Endothelial cell of umbilical vein (primary cell): ENCODE measurements at regions of chr19 and their contacts with region 1.

Region 1: DNA sequence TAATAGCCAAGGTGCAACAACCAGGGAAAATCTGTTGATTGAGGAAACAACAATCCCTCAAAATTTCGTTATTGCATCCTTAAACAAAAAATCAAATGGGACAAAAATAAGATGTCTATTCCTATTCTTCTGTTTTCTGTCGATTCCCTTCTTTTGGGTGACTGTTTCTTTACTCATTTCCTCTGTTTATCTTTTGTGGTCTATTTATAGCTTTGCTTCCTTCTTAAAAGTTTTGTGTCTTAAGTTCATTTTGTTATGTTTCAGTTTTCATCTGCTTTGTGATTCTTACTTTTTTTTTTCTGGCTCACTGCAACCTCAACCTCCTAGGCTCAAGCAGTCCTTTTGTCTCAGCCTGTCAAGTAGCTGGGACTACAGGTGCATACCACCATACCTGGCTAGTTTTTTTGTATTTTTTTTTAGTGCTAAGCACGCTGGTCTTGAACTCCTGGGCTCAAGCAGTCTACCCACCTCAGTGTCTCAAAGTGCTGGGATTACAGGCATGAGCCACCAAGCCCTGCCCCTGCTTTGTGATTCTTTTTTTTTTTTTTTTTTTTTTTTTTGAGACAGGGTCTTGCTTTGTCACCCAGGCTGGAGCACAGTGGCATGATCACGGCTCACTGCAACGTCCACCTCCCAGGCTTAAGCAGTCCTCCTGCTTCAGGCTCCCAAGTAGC is 10.4 kb downstream of the ZNF146 start:
- DNase-seq: peak; percentile 72
- H3K4me3 ChIP-seq: peak overlapping the region in 1 of 3 experiments; percentile 42
- H3K27ac ChIP-seq: peak overlapping the region; percentile 83
- H3K4me1 ChIP-seq: peaks cover 22% of the 10 kb centered on the region
- H3K27me3 ChIP-seq: no peaks in the 10 kb centered on the region
- CTCF ChIP-seq: no peak
- POLR2A ChIP-seq: no peak

Region 2: DNA sequence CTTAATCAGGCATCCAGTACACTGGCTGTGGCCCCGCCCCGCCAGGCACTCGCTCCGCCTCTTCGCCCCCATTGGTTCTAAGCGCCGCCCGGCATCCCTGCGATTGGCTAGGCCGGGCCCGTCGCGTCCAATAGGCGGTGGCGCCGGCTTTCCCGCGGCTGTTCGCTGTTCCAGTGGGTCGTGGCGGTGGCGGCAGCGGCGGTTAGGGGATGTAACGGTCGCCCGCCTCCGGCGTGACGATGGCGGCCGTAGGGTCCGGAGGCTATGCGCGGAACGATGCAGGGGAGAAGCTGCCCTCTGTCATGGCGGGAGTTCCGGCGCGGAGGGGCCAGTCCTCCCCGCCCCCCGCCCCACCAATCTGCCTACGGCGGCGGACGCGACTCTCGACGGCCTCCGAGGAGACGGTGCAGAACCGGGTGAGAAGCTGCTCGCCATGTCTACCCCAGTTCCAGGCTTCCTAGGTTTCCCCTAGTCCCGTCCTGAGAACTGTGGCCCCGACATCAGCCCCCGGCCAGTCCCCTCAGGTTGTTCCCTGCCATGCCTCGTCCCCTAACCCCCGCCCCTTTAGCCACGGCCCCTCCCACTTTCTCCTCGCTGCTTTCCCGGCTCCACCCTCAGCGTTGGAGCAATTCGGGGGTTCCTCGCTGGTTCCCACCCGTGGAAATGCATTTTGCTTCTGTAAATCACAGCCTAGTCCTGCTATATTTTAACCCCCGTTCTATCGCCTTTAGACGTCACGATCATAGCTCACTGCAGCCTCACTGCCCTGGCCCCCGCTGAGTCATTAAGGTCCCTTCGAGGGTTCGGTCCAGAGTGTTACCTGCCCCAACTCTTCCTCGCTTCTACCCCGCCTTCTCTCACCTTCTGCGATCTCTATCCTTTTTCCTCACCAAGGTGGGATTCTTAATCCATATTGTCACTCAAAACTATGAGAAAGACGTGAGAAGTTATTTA is 170.3 kb before region 1 on chr19 and contains the start of gene WDR62:
- CTCF ChIA-PET with region 1: no interaction called
- POLR2A ChIA-PET with region 1: no interaction called
- dilution Hi-C with region 1: no loop called
- intact Hi-C with region 1: no loop called
- DNase-seq: no peak
- H3K4me3 ChIP-seq: peak within 1 kb of the TSS; percentile 76 to 89 (median 87)
- H3K27ac ChIP-seq: peak within 1 kb of the TSS; percentile 79
- H3K4me1 ChIP-seq: peaks cover 16% of the 10 kb centered on the region
- H3K27me3 ChIP-seq: no peaks in the 10 kb centered on the region
- CTCF ChIP-seq: no peak
- POLR2A ChIP-seq: no peak
- total RNA-seq, gene WDR62: 12.1 and 13.4 TPM in 2 replicates

Region 3: GRCh38 chr19:36207605-36208252 is 17.6 kb before region 1 on chr19:
- CTCF ChIA-PET with region 1: no interaction called
- POLR2A ChIA-PET with region 1: no interaction called
- dilution Hi-C with region 1: no loop called
- intact Hi-C with region 1: no loop called
- DNase-seq: no peak
- H3K4me3 ChIP-seq: no peak overlapping the region
- H3K27ac ChIP-seq: no peak overlapping the region
- H3K4me1 ChIP-seq: no peaks in the 10 kb centered on the region
- H3K27me3 ChIP-seq: no peaks in the 10 kb centered on the region
- CTCF ChIP-seq: no peak
- POLR2A ChIP-seq: no peak

Region 4: GRCh38 chr19:36392916-36393673 is 167.7 kb after region 1 on chr19:
- CTCF ChIA-PET with region 1: no interaction called
- POLR2A ChIA-PET with region 1: interaction called, 15 read pairs
- dilution Hi-C with region 1: no loop called
- intact Hi-C with region 1: no loop called
- DNase-seq: no peak
- H3K4me3 ChIP-seq: no peak overlapping the region
- H3K27ac ChIP-seq: no peak overlapping the region
- H3K4me1 ChIP-seq: no peaks in the 10 kb centered on the region
- H3K27me3 ChIP-seq: no peaks in the 10 kb centered on the region
- CTCF ChIP-seq: no peak
- POLR2A ChIP-seq: no peak